ENCODE measurements at regions of chr19 and their contacts with region 1.

Region 1: GRCh38 chr19:41753936-41754529 is 1.3 kb upstream of the CEACAM6 start:
- DNase-seq: peak; percentile 39
- ATAC-seq: peak; percentile 92
- H3K4me3 ChIP-seq: no peak overlapping the region
- H3K27ac ChIP-seq: no peak overlapping the region
- H3K4me1 ChIP-seq: peaks cover 0 to 7% of the 10 kb centered on the region in 2 experiments; a peak in 1 of 4 replicates
- H3K27me3 ChIP-seq: peaks cover 56% of the 10 kb centered on the region
- CTCF ChIP-seq: peak; percentile 50 to 86 (median 85)
- POLR2A ChIP-seq: no peak
- RAD21 ChIP-seq: no peak

Region 2: DNA sequence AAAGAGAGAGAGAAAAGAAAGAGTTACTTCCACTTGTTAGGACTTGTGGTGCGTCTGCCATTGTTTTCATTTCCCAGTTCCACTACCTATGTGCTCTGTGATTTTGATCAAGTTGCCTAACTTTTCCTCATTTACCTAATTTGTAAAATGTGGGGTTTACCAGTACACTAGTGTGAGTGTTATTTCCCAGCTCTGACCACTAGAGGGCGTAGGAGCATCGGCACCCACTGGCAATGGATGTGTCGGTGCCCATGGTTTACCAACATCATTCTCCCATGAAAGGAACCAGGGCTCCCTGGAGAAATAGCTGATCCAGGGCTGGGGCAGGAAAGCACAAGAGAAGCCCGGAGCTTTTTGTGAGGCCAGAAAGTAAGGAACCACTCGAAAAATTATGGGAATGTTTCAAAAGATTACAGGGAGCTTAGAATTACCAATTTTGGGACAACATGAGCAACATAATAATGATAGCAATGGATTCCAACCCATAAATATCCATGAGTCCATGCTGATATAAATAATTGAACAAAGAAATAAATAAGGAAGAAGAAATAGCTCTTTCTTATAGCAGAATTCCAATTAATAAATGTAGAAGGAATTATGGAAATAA is 112.1 kb before region 1 on chr19:
- CTCF ChIA-PET with region 1: interaction called, 12 read pairs
- POLR2A ChIA-PET with region 1: no interaction called
- RAD21 ChIA-PET with region 1: no interaction called
- intact Hi-C with region 1: loop called (anchors 5 kb)
- DNase-seq: peak; percentile 37
- ATAC-seq: peak; percentile 94
- H3K4me3 ChIP-seq: no peak overlapping the region
- H3K27ac ChIP-seq: no peak overlapping the region
- H3K4me1 ChIP-seq: no peaks in the 10 kb centered on the region
- H3K27me3 ChIP-seq: peaks cover 38% of the 10 kb centered on the region
- CTCF ChIP-seq: peak; percentile 84 to 98 (median 87)
- POLR2A ChIP-seq: no peak
- RAD21 ChIP-seq: peak; percentile 75

Region 3: GRCh38 chr19:41767115-41767514 is 13.1 kb after region 1 on chr19:
- CTCF ChIA-PET with region 1: interaction called, 16 read pairs
- POLR2A ChIA-PET with region 1: no interaction called
- RAD21 ChIA-PET with region 1: no interaction called
- intact Hi-C with region 1: no loop called
- DNase-seq: no peak
- ATAC-seq: no peak
- H3K4me3 ChIP-seq: no peak overlapping the region
- H3K27ac ChIP-seq: no peak overlapping the region
- H3K4me1 ChIP-seq: no peaks in the 10 kb centered on the region
- H3K27me3 ChIP-seq: peaks cover 74% of the 10 kb centered on the region
- CTCF ChIP-seq: no peak
- POLR2A ChIP-seq: no peak
- RAD21 ChIP-seq: no peak

Region 4: DNA sequence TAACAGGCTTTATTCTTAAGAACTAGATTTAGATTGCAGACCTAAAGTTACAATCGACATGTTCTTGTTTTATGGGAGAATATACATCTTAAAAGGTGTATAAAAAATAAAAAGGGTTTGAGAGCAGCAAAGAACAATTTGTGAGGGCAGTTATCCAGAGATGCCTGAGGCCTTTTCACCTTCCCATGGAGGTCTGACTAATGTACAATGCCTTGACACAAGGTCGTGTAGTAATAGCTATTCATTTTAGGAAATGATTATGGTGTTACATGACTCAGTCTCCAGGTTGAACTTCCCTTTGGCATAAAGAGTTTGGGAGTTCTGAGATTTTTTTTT is 21.3 kb after region 1 on chr19:
- CTCF ChIA-PET with region 1: interaction called, 32 read pairs
- POLR2A ChIA-PET with region 1: no interaction called
- RAD21 ChIA-PET with region 1: no interaction called
- intact Hi-C with region 1: no loop called
- DNase-seq: no peak
- ATAC-seq: no peak
- H3K4me3 ChIP-seq: no peak overlapping the region
- H3K27ac ChIP-seq: no peak overlapping the region
- H3K4me1 ChIP-seq: peaks cover 3 to 23% of the 10 kb centered on the region in 2 experiments
- H3K27me3 ChIP-seq: peaks cover 67% of the 10 kb centered on the region
- CTCF ChIP-seq: no peak
- POLR2A ChIP-seq: no peak
- RAD21 ChIP-seq: no peak

Region 5: DNA sequence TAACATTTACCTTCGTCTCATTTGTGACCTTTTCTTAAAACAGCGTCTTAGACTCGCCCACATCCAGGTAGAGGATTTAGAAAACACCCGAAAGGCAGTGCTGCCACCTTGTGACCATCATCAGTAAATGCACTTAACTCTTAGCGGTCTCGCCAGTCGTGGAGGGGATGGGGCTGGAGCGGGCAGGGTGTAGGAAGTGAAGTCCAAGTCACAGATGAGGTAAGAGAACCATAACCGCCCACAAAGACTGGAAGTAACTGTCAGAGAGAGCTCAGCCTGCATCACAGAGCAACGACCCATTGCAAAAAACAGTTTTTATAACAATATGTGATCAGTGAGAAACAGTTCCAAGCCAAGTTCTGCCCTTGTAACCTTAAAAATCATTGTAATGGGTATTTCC is 31.6 kb after region 1 on chr19:
- CTCF ChIA-PET with region 1: interaction called, 43 read pairs
- POLR2A ChIA-PET with region 1: no interaction called
- RAD21 ChIA-PET with region 1: no interaction called
- intact Hi-C with region 1: loop called (anchors 1 kb)
- DNase-seq: peak; percentile 80
- ATAC-seq: peak; percentile 98
- H3K4me3 ChIP-seq: no peak overlapping the region
- H3K27ac ChIP-seq: no peak overlapping the region
- H3K4me1 ChIP-seq: peaks cover 0 to 4% of the 10 kb centered on the region in 2 experiments; a peak in 1 of 4 replicates
- H3K27me3 ChIP-seq: peaks cover 52% of the 10 kb centered on the region
- CTCF ChIP-seq: peak; percentile 80 to 96 (median 89)
- POLR2A ChIP-seq: no peak
- RAD21 ChIP-seq: peak; percentile 92

Region 6: GRCh38 chr19:41795031-41795461 is 41.0 kb after region 1 on chr19:
- CTCF ChIA-PET with region 1: interaction called, 24 read pairs
- POLR2A ChIA-PET with region 1: no interaction called
- RAD21 ChIA-PET with region 1: no interaction called
- intact Hi-C with region 1: no loop called
- DNase-seq: peak; percentile 38
- ATAC-seq: peak; percentile 93
- H3K4me3 ChIP-seq: no peak overlapping the region
- H3K27ac ChIP-seq: no peak overlapping the region
- H3K4me1 ChIP-seq: no peaks in the 10 kb centered on the region; a peak in 1 of 4 replicates
- H3K27me3 ChIP-seq: peaks cover 22% of the 10 kb centered on the region; the same call in 1 of the 2 replicates
- CTCF ChIP-seq: peak; percentile 54 to 89 (median 83)
- POLR2A ChIP-seq: no peak
- RAD21 ChIP-seq: peak; percentile 41

Region 7: DNA sequence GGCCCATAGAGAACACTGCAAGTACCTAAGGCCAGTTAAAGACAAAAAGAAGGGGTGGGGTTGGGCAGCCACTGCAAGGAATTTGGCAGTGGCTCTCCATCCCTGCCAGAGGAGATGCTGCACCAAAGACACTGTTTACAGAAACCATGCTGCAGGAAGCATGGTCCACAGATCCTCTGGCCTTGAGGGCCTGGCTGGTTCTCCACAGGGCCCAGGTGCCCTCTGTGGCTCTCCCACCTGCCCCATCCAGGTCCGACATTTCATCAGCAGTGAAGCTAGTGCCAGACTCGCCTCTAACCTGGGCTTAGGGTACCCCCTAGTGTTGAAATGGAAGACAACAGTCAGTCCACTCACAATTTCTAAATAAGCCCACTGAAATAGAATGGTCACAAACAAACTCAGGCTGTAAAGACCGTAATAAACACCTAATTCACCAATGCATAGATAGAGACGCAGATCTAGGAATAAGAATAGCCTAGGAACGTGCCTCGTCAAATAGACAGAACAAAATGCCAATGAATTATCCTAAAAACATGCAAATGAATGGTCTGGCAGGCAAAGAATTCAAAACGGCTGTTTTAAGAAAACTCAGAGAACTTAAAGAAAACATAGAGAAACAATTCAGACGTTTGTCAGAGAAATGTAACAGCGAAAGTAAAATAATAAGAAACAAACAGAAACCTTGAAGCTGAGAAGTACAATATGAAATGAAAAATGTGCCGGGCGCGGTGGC is 67.1 kb after region 1 on chr19:
- CTCF ChIA-PET with region 1: interaction called, 45 read pairs
- POLR2A ChIA-PET with region 1: no interaction called
- RAD21 ChIA-PET with region 1: interaction called, 3 to 4 read pairs
- intact Hi-C with region 1: loop called (anchors 1 kb)
- DNase-seq: peak; percentile 57
- ATAC-seq: peak; percentile 97
- H3K4me3 ChIP-seq: no peak overlapping the region
- H3K27ac ChIP-seq: no peak overlapping the region
- H3K4me1 ChIP-seq: no peaks in the 10 kb centered on the region
- H3K27me3 ChIP-seq: peaks cover 4% of the 10 kb centered on the region
- CTCF ChIP-seq: peak; percentile 79 to 83 (median 83)
- POLR2A ChIP-seq: no peak
- RAD21 ChIP-seq: peak; percentile 81

Region 8: DNA sequence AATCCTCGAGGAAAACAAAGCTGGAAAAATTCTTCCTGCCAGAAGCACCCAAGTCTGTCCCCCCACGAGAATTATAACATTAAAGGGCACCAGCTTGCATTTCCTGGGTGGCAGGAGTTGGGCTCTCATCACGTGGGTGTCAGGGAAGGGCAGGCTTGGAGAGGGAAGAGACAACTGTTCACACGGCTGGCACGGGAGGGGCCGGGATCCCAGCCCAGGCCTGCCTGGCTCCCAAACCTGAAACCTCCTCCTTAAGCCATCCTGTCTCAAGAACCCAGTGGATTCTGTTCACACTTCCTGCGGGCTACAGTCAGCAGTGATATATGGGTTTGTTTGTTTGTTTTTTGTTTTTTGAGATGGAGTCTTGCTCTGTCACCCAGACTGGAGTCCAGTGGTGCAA is 303.8 kb after region 1 on chr19:
- CTCF ChIA-PET with region 1: no interaction called
- POLR2A ChIA-PET with region 1: no interaction called
- RAD21 ChIA-PET with region 1: no interaction called
- intact Hi-C with region 1: no loop called
- DNase-seq: no peak
- ATAC-seq: no peak
- H3K4me3 ChIP-seq: no peak overlapping the region
- H3K27ac ChIP-seq: no peak overlapping the region
- H3K4me1 ChIP-seq: peaks cover 0 to 8% of the 10 kb centered on the region in 2 experiments; a peak in 2 of 4 replicates
- H3K27me3 ChIP-seq: no peaks in the 10 kb centered on the region
- CTCF ChIP-seq: no peak
- POLR2A ChIP-seq: no peak
- RAD21 ChIP-seq: no peak